ENCODE measurements at regions of chr7 and their contacts with region 1.

Region 1: GRCh38 chr7:22723181-22723601 is 3.8 kb upstream of the IL6 start:
- DNase-seq: peak in 1 of 2 donors; percentile 32
- H3K4me3 ChIP-seq: no peak overlapping the region
- H3K27ac ChIP-seq: peak overlapping the region; percentile 15 to 56
- H3K4me1 ChIP-seq: peaks cover 0 to 5% of the 10 kb centered on the region in 2 donors
- H3K27me3 ChIP-seq: no peaks in the 10 kb centered on the region
- CTCF ChIP-seq: no peak
- POLR2A ChIP-seq: no peak

Region 2: GRCh38 chr7:22559829-22560489 is 163.2 kb before region 1 on chr7:
- intact Hi-C with region 1: loop called (anchors 5 kb)
- DNase-seq: peak; percentile 55 to 56
- H3K4me3 ChIP-seq: no peak overlapping the region
- H3K27ac ChIP-seq: no peak overlapping the region
- H3K4me1 ChIP-seq: peaks cover 0 to 7% of the 10 kb centered on the region in 2 donors
- H3K27me3 ChIP-seq: no peaks in the 10 kb centered on the region
- CTCF ChIP-seq: peak; percentile 89 to 96 (median 90)
- POLR2A ChIP-seq: no peak

Region 3: GRCh38 chr7:22601812-22602565 is 121.2 kb before region 1 on chr7:
- intact Hi-C with region 1: loop called (anchors 10 kb)
- DNase-seq: no peak
- H3K4me3 ChIP-seq: no peak overlapping the region
- H3K27ac ChIP-seq: peak overlapping the region in 1 of 2 donors; percentile 71
- H3K4me1 ChIP-seq: no peaks in the 10 kb centered on the region
- H3K27me3 ChIP-seq: no peaks in the 10 kb centered on the region
- CTCF ChIP-seq: no peak
- POLR2A ChIP-seq: no peak